Natural killer cell (primary cell): ENCODE measurements at regions of chr9 and their contacts with region 1.

Region 1: DNA sequence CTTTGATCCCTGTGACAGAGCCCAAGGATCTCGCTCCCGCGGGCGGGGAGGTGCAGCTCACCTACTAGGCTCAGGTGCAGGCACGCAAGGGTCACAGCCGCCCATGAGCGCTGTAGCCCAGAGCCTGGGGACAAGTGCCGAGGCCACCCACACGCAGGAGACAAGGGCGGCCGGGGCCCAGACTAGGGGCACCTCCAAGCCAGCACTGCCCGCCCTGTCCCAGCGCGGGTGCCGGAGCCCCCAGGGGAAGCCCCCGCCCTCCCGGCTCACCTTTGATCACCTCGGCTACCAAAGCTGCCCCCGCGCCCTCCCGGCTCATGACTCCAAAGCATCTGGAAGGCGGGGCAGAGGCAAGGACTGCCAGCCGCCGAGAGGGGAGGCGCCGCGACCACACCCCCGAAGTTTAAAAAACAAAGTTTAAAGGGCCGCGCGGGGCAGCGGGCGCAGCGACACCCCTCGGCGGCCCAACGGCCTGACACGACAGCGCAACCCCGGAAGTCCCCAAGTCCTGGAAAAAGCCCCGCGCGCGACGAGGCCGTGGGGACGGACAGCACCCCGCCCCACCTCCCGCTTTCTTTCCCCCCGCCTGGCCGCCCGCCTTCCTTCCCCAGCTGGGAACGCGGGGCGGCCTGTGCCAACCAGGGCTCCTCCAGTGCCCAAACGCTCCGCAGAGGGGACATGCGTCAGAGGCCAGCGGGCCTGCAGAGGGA is 53.0 kb downstream of the CDC14B start:
- DNase-seq: peak; percentile 72 to 90
- ATAC-seq: peak; percentile 95
- H3K4me3 ChIP-seq: peak overlapping the region; percentile 74
- H3K4me3 Mint-ChIP-seq: peak overlapping the region; percentile 88
- H3K27ac ChIP-seq: peak overlapping the region; percentile 89
- H3K27ac Mint-ChIP-seq: peak overlapping the region; percentile 59 to 87
- H3K4me1 ChIP-seq: peaks cover 13% of the 10 kb centered on the region
- H3K4me1 Mint-ChIP-seq: peaks cover 8 to 17% of the 10 kb centered on the region in 2 donors
- H3K27me3 ChIP-seq: no peaks in the 10 kb centered on the region
- H3K27me3 Mint-ChIP-seq: peaks cover 3 to 15% of the 10 kb centered on the region in 2 donors
- CTCF ChIP-seq: peak; percentile 68

Region 2: DNA sequence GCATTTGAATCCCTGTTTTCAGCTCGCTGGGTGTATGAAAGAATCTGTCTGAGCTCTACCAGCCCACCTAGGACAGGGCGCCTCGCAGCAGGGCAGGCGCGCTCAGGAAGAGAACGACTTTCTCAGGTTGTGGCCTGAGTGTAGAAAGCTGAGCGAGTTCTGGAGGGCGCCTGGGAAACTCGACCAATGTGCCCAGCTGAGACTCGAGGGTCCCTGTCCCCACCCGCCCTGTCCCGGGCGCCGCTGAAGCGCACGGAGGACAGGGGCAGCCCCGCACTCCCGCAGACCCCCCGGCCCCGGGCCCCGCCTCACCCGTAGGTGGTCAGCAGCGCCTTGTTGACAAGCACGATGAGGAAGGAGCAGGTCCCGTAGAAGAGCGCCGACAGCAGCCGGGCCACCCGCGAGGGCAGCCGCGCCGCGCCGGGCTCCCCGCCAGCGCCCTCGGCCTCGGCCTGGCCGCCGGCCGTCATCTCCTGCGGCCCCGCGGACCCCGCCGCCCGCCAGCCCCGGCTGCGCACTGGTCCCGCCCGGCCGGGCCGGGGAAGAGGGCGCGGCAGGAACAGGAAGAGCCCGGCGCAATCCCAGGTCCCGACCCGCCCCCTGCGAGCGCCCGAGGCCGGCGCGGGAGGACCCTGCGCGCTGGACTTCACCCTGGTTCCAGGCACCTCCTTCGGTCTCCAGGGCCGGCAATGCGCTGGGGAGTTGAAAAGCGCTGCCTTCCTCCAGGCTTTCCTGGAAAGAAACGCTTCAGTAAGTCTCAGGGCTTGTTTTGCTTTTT is 183.3 kb before region 1 on chr9 and contains the start of gene SLC35D2:
- intact Hi-C with region 1: loop called (anchors 2 kb)
- DNase-seq: peak; percentile 18 to 43
- ATAC-seq: peak; percentile 68 to 75 (median 72)
- H3K4me3 ChIP-seq: peak within 1 kb of the TSS; percentile 59
- H3K4me3 Mint-ChIP-seq: peak within 1 kb of the TSS; percentile 83
- H3K27ac ChIP-seq: no peak within 1 kb of the TSS
- H3K27ac Mint-ChIP-seq: peak within 1 kb of the TSS; percentile 61 to 80
- H3K4me1 ChIP-seq: peaks cover 21% of the 10 kb centered on the region
- H3K4me1 Mint-ChIP-seq: peaks cover 27 to 39% of the 10 kb centered on the region in 2 donors
- H3K27me3 ChIP-seq: no peaks in the 10 kb centered on the region
- H3K27me3 Mint-ChIP-seq: no peaks in the 10 kb centered on the region
- CTCF ChIP-seq: no peak
- total RNA-seq, gene SLC35D2: 13.4 to 18.9 (median 17.3) TPM